ENCODE measurements at regions of chr5 and their contacts with region 1.

Region 1: GRCh38 chr5:81207009-81207408 is 26.1 kb upstream of the CKMT2 start:
- DNase-seq: no peak
- H3K4me3 ChIP-seq: no peak overlapping the region
- H3K27me3 ChIP-seq: no peaks in the 10 kb centered on the region
- CTCF ChIP-seq: no peak; the same call in 1 of the 2 replicates

Region 2: GRCh38 chr5:81097713-81098112 is 109.3 kb before region 1 on chr5:
- CTCF ChIA-PET with region 1: no interaction called
- POLR2A ChIA-PET with region 1: no interaction called
- DNase-seq: peak; percentile 17
- H3K4me3 ChIP-seq: no peak overlapping the region
- H3K27me3 ChIP-seq: no peaks in the 10 kb centered on the region
- CTCF ChIP-seq: no peak

Region 3: GRCh38 chr5:81194633-81195333 is 12.2 kb before region 1 on chr5:
- CTCF ChIA-PET with region 1: interaction called, 38 read pairs
- POLR2A ChIA-PET with region 1: no interaction called
- DNase-seq: peak; percentile 19
- H3K4me3 ChIP-seq: no peak overlapping the region
- H3K27me3 ChIP-seq: no peaks in the 10 kb centered on the region; the same call in 1 of the 2 replicates
- CTCF ChIP-seq: peak; percentile 98